ENCODE measurements at regions of chr9 and their contacts with region 1.

Region 1: GRCh38 chr9:73023025-73023541 is 70.2 kb upstream of the ALDH1A1 start:
- DNase-seq: peak; percentile 16 to 35
- ATAC-seq: peak; percentile 74 to 77
- H3K4me3 ChIP-seq: no peak overlapping the region
- H3K27ac ChIP-seq: no peak overlapping the region
- H3K4me1 ChIP-seq: peaks cover 10 to 13% of the 10 kb centered on the region in 2 donors
- H3K27me3 ChIP-seq: no peaks in the 10 kb centered on the region
- CTCF ChIP-seq: peak; percentile 72 to 86 (median 79)
- POLR2A ChIP-seq: no peak

Region 2: DNA sequence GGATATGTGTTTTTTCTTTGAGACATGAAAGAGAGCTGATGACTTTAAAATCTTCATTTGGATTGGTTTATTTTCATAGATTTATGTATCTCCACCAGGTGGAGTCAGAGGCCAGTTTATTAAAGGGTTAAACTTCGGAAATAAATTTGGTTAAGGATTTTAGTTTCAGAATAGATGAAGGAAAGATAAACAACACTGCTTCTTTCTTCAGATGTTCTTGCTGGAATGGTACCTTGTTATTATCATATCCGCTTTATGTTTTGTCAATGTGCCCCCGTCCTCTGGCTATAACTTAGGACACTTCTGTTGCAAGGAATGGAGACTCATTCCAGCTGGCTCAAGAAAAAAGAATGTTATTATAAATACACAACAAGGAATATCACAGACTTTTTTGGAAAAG is 151.4 kb before region 1 on chr9:
- in situ Hi-C with region 1: loop called in 1 of 4 experiments (anchors 10 kb)
- intact Hi-C with region 1: loop called (anchors 1 kb)
- DNase-seq: no peak
- ATAC-seq: no peak
- H3K4me3 ChIP-seq: peak overlapping the region in 2 of 4 donors; percentile 30 to 32
- H3K27ac ChIP-seq: no peak overlapping the region
- H3K4me1 ChIP-seq: peaks cover 6 to 20% of the 10 kb centered on the region in 2 donors
- H3K27me3 ChIP-seq: no peaks in the 10 kb centered on the region
- CTCF ChIP-seq: peak; percentile 49 to 53 (median 50)
- POLR2A ChIP-seq: no peak

Region 3: GRCh38 chr9:72952914-72953313 is 70.2 kb before region 1 on chr9 and contains the start of gene ALDH1A1:
- in situ Hi-C with region 1: no loop called
- intact Hi-C with region 1: loop called (anchors 5 kb)
- DNase-seq: no peak
- ATAC-seq: peak; percentile 49 to 59
- H3K4me3 ChIP-seq: peak within 1 kb of the TSS; percentile 39 to 46 (median 41)
- H3K27ac ChIP-seq: peak within 1 kb of the TSS; percentile 54 to 78 (median 68)
- H3K4me1 ChIP-seq: peaks cover 0 to 21% of the 10 kb centered on the region in 2 donors
- H3K27me3 ChIP-seq: no peaks in the 10 kb centered on the region
- CTCF ChIP-seq: no peak
- POLR2A ChIP-seq: peak; percentile 11 to 67
- total RNA-seq, gene ALDH1A1: 23.3 to 42.8 (median 30.9) TPM

Region 4: GRCh38 chr9:73081979-73082657 is 59.0 kb after region 1 on chr9:
- in situ Hi-C with region 1: no loop called
- intact Hi-C with region 1: loop called (anchors 10 kb)
- DNase-seq: no peak
- ATAC-seq: peak; percentile 56 to 70
- H3K4me3 ChIP-seq: no peak overlapping the region
- H3K27ac ChIP-seq: no peak overlapping the region
- H3K4me1 ChIP-seq: no peaks in the 10 kb centered on the region
- H3K27me3 ChIP-seq: no peaks in the 10 kb centered on the region
- CTCF ChIP-seq: peak; percentile 30 to 78 (median 49)
- POLR2A ChIP-seq: no peak

Region 5: DNA sequence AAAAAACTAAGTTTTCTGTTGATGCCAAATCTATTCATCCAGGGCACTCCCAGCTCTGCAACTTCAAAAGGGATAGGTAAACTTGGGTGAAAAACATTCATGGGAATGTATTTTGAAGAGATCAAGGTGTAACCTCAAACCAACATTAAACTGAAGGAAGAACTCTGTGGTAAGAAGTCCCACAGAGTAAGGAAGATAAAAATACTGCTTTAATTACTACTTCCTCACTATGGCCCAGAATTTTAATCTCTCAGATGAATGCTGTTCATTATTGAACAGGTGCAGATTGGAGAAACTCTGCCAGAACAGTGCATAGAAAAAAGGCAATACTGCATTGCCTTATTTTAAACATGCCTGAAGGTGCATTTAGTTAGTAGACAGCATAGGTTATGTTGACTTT is 91.0 kb after region 1 on chr9:
- in situ Hi-C with region 1: no loop called
- intact Hi-C with region 1: no loop called
- DNase-seq: no peak
- ATAC-seq: no peak
- H3K4me3 ChIP-seq: no peak overlapping the region
- H3K27ac ChIP-seq: no peak overlapping the region
- H3K4me1 ChIP-seq: no peaks in the 10 kb centered on the region
- H3K27me3 ChIP-seq: no peaks in the 10 kb centered on the region
- CTCF ChIP-seq: no peak
- POLR2A ChIP-seq: no peak

Region 6: DNA sequence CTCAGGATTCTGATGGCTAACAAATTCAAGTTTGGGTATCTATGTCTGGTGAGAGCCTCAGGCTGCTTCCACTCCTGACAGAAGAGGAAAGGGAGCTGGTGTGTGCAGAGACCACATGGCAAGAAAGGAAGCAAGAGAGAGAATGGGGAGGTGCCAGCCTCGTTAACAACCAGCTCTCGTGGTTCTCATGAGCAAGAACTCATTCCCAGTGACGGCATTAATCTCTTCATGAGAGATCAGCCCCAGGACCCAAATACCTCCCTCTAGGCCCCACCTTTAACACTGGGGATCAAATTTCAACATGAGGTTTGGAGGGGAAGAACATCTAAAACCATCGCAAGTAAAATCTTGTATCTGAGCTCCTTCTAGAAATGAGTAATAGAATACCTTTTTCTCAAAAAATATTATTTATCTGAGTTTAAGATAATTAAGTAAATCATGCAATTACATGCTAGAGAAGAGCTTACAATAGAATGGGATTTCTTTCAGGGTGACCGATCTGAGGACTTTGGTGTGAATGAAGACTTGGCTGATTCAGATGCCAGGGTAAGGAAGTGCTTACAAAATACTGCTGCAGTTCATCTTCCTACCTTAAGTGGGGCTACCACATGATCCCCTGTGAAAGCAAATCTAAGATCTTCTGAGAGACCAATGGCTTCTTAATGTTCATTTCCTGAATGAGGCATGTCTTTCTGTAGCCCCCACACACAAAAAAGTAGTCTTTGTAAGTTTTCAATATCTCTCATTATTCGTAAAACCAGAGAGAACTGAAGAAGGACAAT is 140.1 kb after region 1 on chr9:
- in situ Hi-C with region 1: no loop called
- intact Hi-C with region 1: no loop called
- DNase-seq: no peak
- ATAC-seq: no peak
- H3K4me3 ChIP-seq: no peak overlapping the region
- H3K27ac ChIP-seq: no peak overlapping the region
- H3K4me1 ChIP-seq: no peaks in the 10 kb centered on the region
- H3K27me3 ChIP-seq: no peaks in the 10 kb centered on the region
- CTCF ChIP-seq: no peak
- POLR2A ChIP-seq: no peak

Measured in gastrocnemius medialis (tissue), 4 donors.